T-cell (primary cell): ENCODE measurements at regions of chr9 and their contacts with region 1.

Region 1: DNA sequence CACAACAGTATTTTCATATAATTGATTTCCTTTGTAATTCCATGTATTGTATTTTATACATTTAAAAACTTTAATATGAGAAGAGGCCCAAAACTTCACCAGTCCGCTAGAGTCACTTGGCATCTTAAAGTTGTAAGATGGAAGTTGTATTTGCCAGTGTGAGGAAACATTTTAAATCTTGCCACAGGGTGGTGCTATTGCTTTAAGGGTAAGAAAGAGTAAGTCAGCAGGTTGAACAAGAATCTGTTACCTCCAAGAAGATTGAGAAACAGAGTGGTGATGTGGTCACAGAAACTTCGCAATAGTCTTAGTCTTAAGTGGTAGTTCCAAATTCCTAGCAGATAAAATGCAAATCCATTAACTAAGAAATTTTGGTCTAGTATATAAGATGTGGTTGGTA is 39.8 kb upstream of the RANBP6 start:
- DNase-seq: peak in 20 of 35 experiments; percentile 4 to 79 (median 32)
- ATAC-seq: peak in 2 of 4 experiments; percentile 65 to 71
- H3K4me3 ChIP-seq: no peak overlapping the region
- H3K4me3 Mint-ChIP-seq: no peak overlapping the region
- H3K27ac ChIP-seq: no peak overlapping the region
- H3K27ac Mint-ChIP-seq: no peak overlapping the region
- H3K4me1 ChIP-seq: no peaks in the 10 kb centered on the region
- H3K4me1 Mint-ChIP-seq: peaks cover 0 to 9% (median 2%) of the 10 kb centered on the region in 3 donors
- H3K27me3 ChIP-seq: no peaks in the 10 kb centered on the region
- H3K27me3 Mint-ChIP-seq: peaks cover 1 to 5% of the 10 kb centered on the region in 2 donors

Region 2: DNA sequence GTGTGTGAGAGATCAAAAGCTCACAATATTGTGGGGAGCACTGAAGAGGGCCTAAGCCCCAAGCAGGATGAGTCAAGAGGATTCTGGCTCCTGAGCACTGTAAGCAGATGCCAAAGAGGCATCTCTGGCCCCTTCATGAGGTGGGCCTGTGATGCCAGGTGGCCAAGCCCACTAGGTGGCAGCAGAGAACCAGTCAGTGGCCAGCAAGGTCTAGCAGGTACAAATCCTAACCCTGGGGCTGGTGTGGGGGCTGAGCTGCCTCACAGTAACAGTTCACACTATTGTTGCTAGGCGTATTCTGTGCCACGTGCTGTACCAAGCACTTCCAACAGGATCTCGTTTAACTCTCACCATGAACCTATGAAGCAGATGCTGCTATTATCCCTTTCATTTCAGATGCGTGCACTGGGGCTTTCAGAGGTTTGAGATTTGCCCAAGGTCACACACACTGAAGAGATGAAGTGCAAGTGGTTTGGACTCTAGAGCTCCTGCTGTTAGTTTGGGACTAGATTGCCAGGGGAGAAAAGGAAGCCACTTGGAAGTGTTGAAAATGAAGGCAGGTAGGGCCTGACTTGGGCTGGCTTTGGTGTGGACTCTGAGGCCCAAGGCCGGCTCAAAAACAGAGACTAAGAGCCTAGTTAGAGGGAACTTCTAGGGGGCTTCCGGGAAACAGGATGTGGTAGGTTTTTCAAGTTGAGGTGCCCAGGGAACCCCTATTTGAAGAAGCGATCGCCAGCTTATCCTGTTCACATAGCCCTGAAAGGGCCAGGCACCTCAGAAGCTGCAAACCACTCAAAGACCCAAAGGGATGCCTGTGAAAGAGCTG is 168.9 kb before region 1 on chr9:
- CTCF ChIA-PET with region 1: interaction called, 12 to 14 read pairs
- POLR2A ChIA-PET with region 1: no interaction called
- DNase-seq: peak; percentile 43 to 85 (median 69)
- ATAC-seq: peak; percentile 87 to 93 (median 92)
- H3K4me3 ChIP-seq: no peak overlapping the region
- H3K4me3 Mint-ChIP-seq: no peak overlapping the region
- H3K27ac ChIP-seq: no peak overlapping the region
- H3K27ac Mint-ChIP-seq: peak overlapping the region in 1 of 2 donors; percentile 59
- H3K4me1 ChIP-seq: peaks cover 0 to 11% of the 10 kb centered on the region in 2 experiments
- H3K4me1 Mint-ChIP-seq: peaks cover 5 to 10% (median 7%) of the 10 kb centered on the region in 3 donors
- H3K27me3 ChIP-seq: no peaks in the 10 kb centered on the region
- H3K27me3 Mint-ChIP-seq: no peaks in the 10 kb centered on the region

Region 3: DNA sequence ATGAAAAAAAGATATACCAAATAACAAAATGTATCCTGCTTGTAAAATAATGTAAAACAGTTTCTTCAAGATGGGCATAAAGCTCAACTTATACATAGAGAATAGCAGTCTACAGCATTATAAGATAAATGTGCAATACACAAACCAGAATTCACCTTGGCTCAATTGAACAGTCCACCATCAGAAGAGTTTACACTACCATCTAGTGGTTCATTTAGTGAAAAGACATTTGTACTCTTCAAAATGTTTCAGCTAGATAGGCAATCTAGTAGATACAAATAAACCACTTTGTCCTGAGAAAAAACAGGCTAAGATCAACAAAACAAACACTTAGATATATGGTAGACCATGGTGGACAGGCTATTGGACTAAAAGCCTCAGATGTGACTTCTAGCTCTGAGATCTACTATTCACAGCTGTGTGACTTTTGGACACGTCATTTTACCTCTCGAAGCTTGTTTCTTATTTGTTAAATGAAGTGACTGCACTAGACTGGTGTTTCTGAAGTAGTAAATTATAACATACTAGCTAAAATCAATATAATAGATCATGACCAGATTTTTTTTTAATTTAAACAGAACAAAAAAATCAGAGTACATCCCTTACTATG is 250.8 kb after region 1 on chr9:
- CTCF ChIA-PET with region 1: interaction called, 17 to 24 read pairs
- POLR2A ChIA-PET with region 1: no interaction called
- DNase-seq: peak in 1 of 35 experiments; percentile 32
- ATAC-seq: peak in 1 of 4 experiments; percentile 42
- H3K4me3 ChIP-seq: no peak overlapping the region
- H3K4me3 Mint-ChIP-seq: no peak overlapping the region
- H3K27ac ChIP-seq: no peak overlapping the region
- H3K27ac Mint-ChIP-seq: no peak overlapping the region
- H3K4me1 ChIP-seq: no peaks in the 10 kb centered on the region
- H3K4me1 Mint-ChIP-seq: no peaks in the 10 kb centered on the region
- H3K27me3 ChIP-seq: no peaks in the 10 kb centered on the region
- H3K27me3 Mint-ChIP-seq: peaks cover 9 to 12% of the 10 kb centered on the region in 2 donors